GM10248 (cell line): ENCODE measurements at regions of chr18 and their contacts with region 1.

Region 1: GRCh38 chr18:58768293-58768974 is 96.2 kb upstream of the ZNF532 start:
- DNase-seq: peak; percentile 88
- CTCF ChIP-seq: peak; percentile 91

Region 2: DNA sequence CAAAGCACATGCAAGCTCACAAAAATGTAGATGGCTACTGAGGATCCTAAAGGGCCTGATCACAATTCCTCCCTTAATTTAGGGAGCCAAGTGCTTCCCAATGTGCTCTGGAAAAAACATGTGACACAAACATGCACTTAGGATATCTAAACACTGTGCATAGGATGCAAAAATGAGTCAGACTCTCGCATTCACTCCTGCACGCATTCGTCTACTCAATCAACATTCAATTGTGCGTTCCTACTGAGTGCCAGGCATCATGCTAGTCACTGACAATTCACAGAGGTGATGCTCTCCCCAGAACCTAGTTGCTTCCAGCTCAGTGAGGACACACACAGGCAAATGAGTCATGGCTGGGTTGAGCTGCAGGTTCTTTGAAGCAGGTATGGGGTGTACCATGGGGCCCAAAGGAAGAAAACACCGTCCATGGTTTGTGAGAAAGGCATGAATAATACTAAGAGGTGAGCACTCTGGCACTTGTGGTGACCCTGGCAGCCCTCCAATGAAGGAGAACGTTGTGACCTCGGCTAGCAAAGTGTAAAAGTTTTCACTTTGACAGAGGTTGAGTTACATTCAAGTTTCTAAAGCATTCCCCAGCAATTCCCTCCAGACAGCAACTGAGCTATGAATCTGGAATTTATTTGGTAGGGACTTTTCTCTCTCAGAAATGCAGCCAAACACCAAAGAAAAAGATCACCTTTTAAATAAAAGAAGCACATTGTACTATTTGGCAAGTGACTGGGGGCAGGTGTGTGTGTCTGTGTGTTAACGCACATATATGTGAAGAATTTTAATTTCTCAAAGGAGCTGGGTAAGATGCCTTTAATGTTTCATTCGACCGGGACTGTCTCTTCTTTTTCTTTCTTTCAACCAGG is 312.9 kb before region 1 on chr18:
- CTCF ChIA-PET with region 1: interaction called, 15 read pairs
- POLR2A ChIA-PET with region 1: no interaction called
- DNase-seq: no peak
- CTCF ChIP-seq: no peak

Region 3: GRCh38 chr18:58541789-58542425 is 226.5 kb before region 1 on chr18:
- CTCF ChIA-PET with region 1: interaction called, 366 read pairs
- POLR2A ChIA-PET with region 1: interaction called, 3 read pairs
- DNase-seq: peak; percentile 54
- CTCF ChIP-seq: no peak

Region 4: GRCh38 chr18:58732471-58732870 is 36.0 kb before region 1 on chr18:
- CTCF ChIA-PET with region 1: interaction called, 14 read pairs
- POLR2A ChIA-PET with region 1: no interaction called
- DNase-seq: no peak
- CTCF ChIP-seq: no peak

Region 5: DNA sequence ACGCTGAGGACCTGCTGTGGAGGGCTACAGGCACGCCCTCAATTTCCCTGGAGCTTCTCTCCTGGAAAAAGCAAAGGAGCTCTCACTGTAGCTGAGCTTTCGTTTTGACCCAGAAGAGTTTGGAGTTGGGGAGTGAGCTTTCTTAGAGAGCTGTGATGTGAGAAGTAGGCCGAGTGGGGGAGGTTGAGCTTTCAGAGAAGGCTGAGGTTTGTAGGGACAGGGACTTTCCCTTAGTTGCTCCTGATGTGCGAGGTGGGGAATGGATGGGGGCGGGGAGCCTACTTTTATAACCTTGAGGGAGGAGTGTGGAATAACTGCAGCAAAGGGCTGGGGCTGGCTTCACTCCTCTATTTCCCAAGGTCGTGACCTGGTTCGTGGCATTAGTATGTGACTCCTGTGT is 143.3 kb after region 1 on chr18:
- CTCF ChIA-PET with region 1: no interaction called
- POLR2A ChIA-PET with region 1: no interaction called
- DNase-seq: no peak
- CTCF ChIP-seq: no peak

Region 6: DNA sequence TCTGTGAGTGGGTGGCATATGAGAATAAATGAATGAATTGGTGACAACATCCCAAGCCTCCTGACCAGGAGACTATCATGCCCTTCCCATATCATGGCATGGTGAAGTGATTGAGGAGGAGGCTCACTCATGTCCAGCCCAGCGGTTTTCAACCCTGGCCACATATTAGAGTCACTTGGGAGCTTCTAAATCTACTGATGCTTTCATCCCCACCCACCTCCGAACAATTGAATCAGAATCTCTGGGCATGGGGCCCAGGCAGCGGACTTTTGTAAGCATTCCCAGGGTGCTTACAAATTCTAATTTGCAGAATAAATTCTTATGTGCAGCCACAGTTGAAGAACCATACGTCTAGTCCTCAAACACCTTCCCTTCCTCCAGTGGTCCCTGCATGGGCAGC is 289.5 kb after region 1 on chr18:
- CTCF ChIA-PET with region 1: interaction called, 15 read pairs
- POLR2A ChIA-PET with region 1: no interaction called
- DNase-seq: no peak
- CTCF ChIP-seq: no peak

Region 7: DNA sequence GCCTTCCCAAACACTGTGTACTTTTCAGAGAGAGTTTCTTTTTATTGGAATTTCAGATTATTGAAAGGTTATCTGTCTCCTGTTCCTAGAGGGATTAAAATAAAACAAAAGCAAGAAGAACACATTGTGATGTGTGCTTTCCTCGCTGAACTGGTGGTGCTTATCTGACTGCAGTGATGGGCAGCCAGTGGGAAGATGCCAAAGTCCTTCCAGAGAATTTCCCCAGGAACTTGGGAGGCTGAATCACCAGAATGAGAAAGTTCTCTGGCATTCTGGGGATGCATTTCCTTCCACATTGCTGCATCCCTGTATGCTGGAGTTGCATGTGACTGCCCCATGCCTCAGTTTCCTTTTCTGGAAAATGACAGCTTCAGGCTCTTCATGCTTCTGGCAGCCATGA is 317.4 kb after region 1 on chr18:
- CTCF ChIA-PET with region 1: interaction called, 19 read pairs
- POLR2A ChIA-PET with region 1: no interaction called
- DNase-seq: no peak
- CTCF ChIP-seq: no peak

Region 8: DNA sequence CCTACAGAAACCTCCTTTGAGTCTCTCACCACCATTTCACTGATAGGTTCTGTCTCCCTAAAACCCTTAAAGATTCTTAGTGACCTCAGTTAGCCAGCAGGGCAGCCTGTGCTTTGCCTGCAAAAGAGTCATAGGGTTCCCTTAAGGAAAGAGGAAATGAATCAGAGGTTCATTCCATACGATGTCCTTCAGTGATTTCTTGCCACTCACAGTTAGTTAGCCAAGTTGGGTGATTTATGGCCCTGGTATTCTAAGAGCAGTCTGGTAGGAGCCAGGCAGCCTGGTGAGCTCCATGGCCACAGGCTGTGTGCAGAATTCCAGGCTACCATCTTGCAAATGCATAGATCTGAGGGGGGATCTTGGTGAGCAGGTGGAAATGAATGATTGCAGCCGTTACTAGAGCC is 947.5 kb after region 1 on chr18:
- CTCF ChIA-PET with region 1: no interaction called
- POLR2A ChIA-PET with region 1: no interaction called
- DNase-seq: no peak
- CTCF ChIP-seq: no peak